Calu3 (cell line): ENCODE measurements at regions of chr18 and their contacts with region 1.

Region 1: DNA sequence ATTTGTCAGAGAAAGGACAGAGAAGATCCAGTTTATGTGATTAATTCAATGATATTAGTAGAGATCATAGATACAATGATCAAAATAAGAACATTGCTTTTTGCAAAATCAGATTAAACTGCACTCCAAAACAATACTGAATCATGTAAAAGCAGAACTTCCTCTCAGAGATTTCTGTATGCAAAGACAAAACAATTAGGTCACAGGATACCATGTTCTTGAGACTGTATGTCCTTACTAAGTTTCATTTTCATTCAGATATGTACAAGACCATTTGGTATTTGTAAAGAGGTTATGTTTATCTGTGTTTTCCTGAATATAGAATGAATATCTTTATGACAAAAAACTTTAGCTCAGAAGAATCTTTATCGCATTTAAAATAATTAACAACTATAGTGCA is 161.8 kb downstream of the DLGAP1 start:
- DNase-seq: no peak
- H3K4me3 Mint-ChIP-seq: no peak overlapping the region
- H3K27ac Mint-ChIP-seq: no peak overlapping the region
- H3K4me1 Mint-ChIP-seq: no peaks in the 10 kb centered on the region
- H3K27me3 Mint-ChIP-seq: no peaks in the 10 kb centered on the region
- CTCF ChIP-seq: no peak

Region 2: DNA sequence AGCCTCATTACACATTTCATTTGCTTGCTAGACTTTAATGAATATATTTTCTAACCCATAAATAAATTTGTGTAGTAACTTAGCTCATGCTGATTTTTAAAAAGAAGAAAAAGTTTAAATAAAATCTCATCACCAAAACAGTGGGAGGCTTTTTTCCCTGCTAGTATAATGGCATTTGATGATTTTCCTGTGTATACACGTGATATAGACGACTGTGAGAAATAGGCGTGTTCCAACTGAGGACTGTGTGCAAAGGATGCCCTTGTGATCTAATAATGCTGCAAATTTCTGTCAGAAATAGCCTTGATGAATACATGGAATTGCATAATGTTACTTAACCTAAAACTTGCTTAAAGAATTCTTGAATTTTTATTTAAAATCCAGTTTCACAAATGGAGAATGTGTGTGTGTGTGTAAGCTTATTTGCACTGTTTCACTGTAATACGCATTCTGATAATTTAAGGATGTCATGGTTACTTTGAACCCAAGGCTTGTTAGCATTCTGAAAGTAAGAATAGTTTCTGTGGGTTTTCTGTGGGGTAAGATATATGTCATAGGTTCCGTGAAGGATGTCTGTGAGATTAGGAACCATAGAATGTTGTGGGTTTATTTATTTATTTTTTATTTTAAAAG is 16.3 kb before region 1 on chr18:
- CTCF ChIA-PET with region 1: no interaction called
- intact Hi-C with region 1: no loop called
- DNase-seq: no peak
- H3K4me3 Mint-ChIP-seq: no peak overlapping the region
- H3K27ac Mint-ChIP-seq: no peak overlapping the region
- H3K4me1 Mint-ChIP-seq: no peaks in the 10 kb centered on the region
- H3K27me3 Mint-ChIP-seq: no peaks in the 10 kb centered on the region
- CTCF ChIP-seq: no peak

Region 3: DNA sequence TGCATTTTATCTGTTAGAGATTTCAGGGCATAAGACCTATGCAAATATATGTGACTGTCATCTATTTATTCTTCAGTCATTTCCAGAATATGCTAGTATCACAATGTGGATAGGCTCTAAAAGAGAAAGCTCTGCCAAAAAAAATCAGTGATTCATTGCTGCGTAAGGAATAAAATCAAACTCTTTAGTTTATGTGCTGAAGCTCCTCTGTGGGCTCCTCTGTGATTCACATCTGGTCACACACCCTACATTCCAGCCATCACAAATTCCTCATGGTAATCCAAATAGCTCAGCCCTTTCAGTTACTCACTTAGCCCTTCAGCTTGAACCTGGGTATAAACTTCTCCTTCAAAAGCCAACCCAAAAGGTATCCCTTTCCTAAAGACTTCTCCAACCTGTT is 140.4 kb after region 1 on chr18:
- CTCF ChIA-PET with region 1: no interaction called
- intact Hi-C with region 1: loop called (anchors 10 kb)
- DNase-seq: no peak
- H3K4me3 Mint-ChIP-seq: no peak overlapping the region
- H3K27ac Mint-ChIP-seq: no peak overlapping the region
- H3K4me1 Mint-ChIP-seq: no peaks in the 10 kb centered on the region
- H3K27me3 Mint-ChIP-seq: no peaks in the 10 kb centered on the region
- CTCF ChIP-seq: no peak

Region 4: GRCh38 chr18:4524096-4524495 is 230.8 kb after region 1 on chr18:
- CTCF ChIA-PET with region 1: no interaction called
- intact Hi-C with region 1: no loop called
- DNase-seq: no peak
- H3K4me3 Mint-ChIP-seq: no peak overlapping the region
- H3K27ac Mint-ChIP-seq: no peak overlapping the region
- H3K4me1 Mint-ChIP-seq: no peaks in the 10 kb centered on the region
- H3K27me3 Mint-ChIP-seq: no peaks in the 10 kb centered on the region
- CTCF ChIP-seq: no peak